ENCODE measurements at regions of chr14 and their contacts with region 1.

Region 1: GRCh38 chr14:35229495-35230089 is 62.6 kb upstream of the PSMA6 start:
- DNase-seq: no peak
- ATAC-seq: peak; percentile 74
- H3K4me3 Mint-ChIP-seq: no peak overlapping the region
- H3K27ac Mint-ChIP-seq: no peak overlapping the region
- H3K4me1 Mint-ChIP-seq: peaks cover 16% of the 10 kb centered on the region
- H3K27me3 Mint-ChIP-seq: no peaks in the 10 kb centered on the region
- CTCF ChIP-seq: peak; percentile 65

Region 2: GRCh38 chr14:35140718-35141581 is 88.6 kb before region 1 on chr14:
- CTCF ChIA-PET with region 1: interaction called, 12 read pairs
- POLR2A ChIA-PET with region 1: no interaction called
- intact Hi-C with region 1: no loop called
- DNase-seq: no peak
- ATAC-seq: peak; percentile 37
- H3K4me3 Mint-ChIP-seq: no peak overlapping the region
- H3K27ac Mint-ChIP-seq: no peak overlapping the region
- H3K4me1 Mint-ChIP-seq: peaks cover 13% of the 10 kb centered on the region
- H3K27me3 Mint-ChIP-seq: no peaks in the 10 kb centered on the region
- CTCF ChIP-seq: peak; percentile 61

Region 3: DNA sequence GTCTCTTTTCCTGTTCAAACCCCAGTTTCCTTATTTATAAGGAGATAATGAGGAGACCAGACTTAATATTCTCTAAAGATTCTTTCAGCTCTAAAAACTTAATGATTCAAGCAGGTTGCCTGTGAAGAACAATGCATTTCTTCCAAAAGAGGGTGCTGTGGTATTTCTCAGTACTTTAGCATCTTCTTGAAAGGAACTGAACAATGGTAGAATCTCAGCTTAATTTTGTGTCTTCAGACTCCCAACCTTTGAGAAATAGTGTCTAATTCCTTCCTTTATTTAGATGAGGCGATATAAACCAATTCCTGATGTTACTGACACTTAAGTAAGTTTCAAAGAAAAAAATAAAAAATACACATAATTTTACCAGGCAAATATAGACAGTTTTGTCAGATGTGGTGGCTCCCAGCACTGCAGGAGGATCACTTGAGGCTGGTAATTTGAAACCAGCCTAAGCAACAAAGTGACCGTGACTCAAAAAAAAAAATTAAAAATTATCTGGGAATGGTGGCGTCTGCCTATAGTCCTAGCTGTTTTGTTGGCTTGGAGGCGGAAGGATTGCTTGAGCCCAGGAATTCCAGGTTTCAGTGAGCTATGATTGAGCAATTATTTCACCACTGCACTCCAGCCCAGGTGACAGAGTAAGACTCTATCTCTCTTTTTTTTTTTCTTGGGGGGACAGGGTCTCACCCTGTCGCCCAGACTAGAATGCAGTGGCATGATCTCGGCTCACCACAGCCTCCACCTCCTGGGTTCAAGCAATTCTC is 14.3 kb before region 1 on chr14:
- CTCF ChIA-PET with region 1: interaction called, 15 read pairs
- POLR2A ChIA-PET with region 1: interaction called, 3 read pairs
- intact Hi-C with region 1: no loop called
- DNase-seq: no peak
- ATAC-seq: no peak
- H3K4me3 Mint-ChIP-seq: no peak overlapping the region
- H3K27ac Mint-ChIP-seq: no peak overlapping the region
- H3K4me1 Mint-ChIP-seq: peaks cover 12% of the 10 kb centered on the region
- H3K27me3 Mint-ChIP-seq: no peaks in the 10 kb centered on the region
- CTCF ChIP-seq: no peak

Region 4: GRCh38 chr14:35285168-35286002 is 55.8 kb after region 1 on chr14:
- CTCF ChIA-PET with region 1: interaction called, 11 read pairs
- POLR2A ChIA-PET with region 1: interaction called, 4 read pairs
- intact Hi-C with region 1: no loop called
- DNase-seq: peak; percentile 54
- ATAC-seq: peak; percentile 63
- H3K4me3 Mint-ChIP-seq: peak overlapping the region; percentile 51
- H3K27ac Mint-ChIP-seq: peak overlapping the region; percentile 97
- H3K4me1 Mint-ChIP-seq: peaks cover 50% of the 10 kb centered on the region
- H3K27me3 Mint-ChIP-seq: no peaks in the 10 kb centered on the region
- CTCF ChIP-seq: no peak

Region 5: DNA sequence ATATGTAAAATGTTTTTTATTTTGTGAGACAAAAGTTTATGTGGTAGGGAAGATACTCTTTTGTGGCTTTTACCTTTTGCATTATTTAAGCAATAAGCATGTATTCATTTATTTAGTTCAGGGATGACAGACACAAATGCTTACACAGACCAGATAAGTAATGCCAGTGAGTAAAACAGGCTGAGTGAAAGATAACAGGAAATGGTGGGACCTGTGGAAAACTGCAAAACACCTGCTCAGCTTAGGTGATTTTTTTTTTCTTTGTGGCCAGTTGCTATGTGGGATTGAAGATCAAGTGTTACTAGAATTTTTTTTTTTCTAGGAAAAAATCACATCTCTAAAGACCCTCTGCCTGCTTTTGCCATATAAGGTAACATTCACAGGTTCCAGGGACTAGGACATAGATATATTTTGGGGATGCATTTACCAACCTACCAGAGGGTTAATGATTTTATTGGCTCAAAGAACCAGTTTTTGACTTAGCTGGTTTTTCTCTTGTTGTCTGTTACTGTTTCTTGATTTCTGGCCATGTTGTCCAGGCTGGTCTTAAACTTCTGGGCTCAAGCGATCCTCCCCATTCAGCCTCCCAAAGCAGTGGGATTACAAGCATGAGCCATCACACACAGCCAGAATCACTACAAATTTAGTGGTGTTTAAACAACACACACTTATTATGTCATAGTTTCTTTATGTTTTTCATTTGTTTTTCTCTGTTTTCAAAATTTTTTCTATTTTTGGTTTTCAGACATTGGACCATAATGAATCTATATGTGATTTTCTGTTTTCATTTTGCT is 72.3 kb after region 1 on chr14:
- CTCF ChIA-PET with region 1: interaction called, 12 read pairs
- POLR2A ChIA-PET with region 1: no interaction called
- intact Hi-C with region 1: no loop called
- DNase-seq: no peak
- ATAC-seq: peak; percentile 63
- H3K4me3 Mint-ChIP-seq: peak overlapping the region; percentile 24
- H3K27ac Mint-ChIP-seq: peak overlapping the region; percentile 77
- H3K4me1 Mint-ChIP-seq: peaks cover 55% of the 10 kb centered on the region
- H3K27me3 Mint-ChIP-seq: no peaks in the 10 kb centered on the region
- CTCF ChIP-seq: no peak

Region 6: GRCh38 chr14:35355981-35356841 is 126.6 kb after region 1 on chr14:
- CTCF ChIA-PET with region 1: no interaction called
- POLR2A ChIA-PET with region 1: no interaction called
- intact Hi-C with region 1: no loop called
- DNase-seq: peak; percentile 75
- ATAC-seq: peak; percentile 74
- H3K4me3 Mint-ChIP-seq: peak overlapping the region; percentile 8
- H3K27ac Mint-ChIP-seq: peak overlapping the region; percentile 85
- H3K4me1 Mint-ChIP-seq: peaks cover 43% of the 10 kb centered on the region
- H3K27me3 Mint-ChIP-seq: no peaks in the 10 kb centered on the region
- CTCF ChIP-seq: no peak